SK-N-SH (cell line): ENCODE measurements at regions of chr17 and their contacts with region 1.

Region 1: GRCh38 chr17:80082403-80083135 is 18.8 kb upstream of the GAA start:
- DNase-seq: peak; percentile 94
- H3K4me3 ChIP-seq: no peak overlapping the region; a peak in 1 of 4 replicates
- H3K27ac ChIP-seq: no peak overlapping the region
- H3K4me1 ChIP-seq: peaks cover 0 to 6% of the 10 kb centered on the region in 2 experiments; a peak in 1 of 4 replicates
- H3K27me3 ChIP-seq: no peaks in the 10 kb centered on the region
- CTCF ChIP-seq: peak; percentile 90
- EP300 ChIP-seq: no peak
- RAD21 ChIP-seq: peak; percentile 90

Region 2: GRCh38 chr17:79777116-79777893 is 305.3 kb before region 1 on chr17:
- CTCF ChIA-PET with region 1: no interaction called
- POLR2A ChIA-PET with region 1: no interaction called
- DNase-seq: no peak
- H3K4me3 ChIP-seq: peak overlapping the region; percentile 62 to 64
- H3K27ac ChIP-seq: peak overlapping the region in 1 of 2 experiments; percentile 80; a peak in 2 of 4 replicates
- H3K4me1 ChIP-seq: peaks cover 0 to 20% of the 10 kb centered on the region in 2 experiments; a peak in 3 of 4 replicates
- H3K27me3 ChIP-seq: peaks cover 27% of the 10 kb centered on the region
- CTCF ChIP-seq: peak; percentile 75
- EP300 ChIP-seq: no peak
- RAD21 ChIP-seq: no peak

Region 3: GRCh38 chr17:80053102-80053501 is 29.5 kb before region 1 on chr17:
- CTCF ChIA-PET with region 1: interaction called, 22 read pairs
- POLR2A ChIA-PET with region 1: no interaction called
- DNase-seq: peak; percentile 54
- H3K4me3 ChIP-seq: no peak overlapping the region
- H3K27ac ChIP-seq: no peak overlapping the region
- H3K4me1 ChIP-seq: no peaks in the 10 kb centered on the region
- H3K27me3 ChIP-seq: no peaks in the 10 kb centered on the region
- CTCF ChIP-seq: no peak
- EP300 ChIP-seq: no peak
- RAD21 ChIP-seq: no peak

Region 4: DNA sequence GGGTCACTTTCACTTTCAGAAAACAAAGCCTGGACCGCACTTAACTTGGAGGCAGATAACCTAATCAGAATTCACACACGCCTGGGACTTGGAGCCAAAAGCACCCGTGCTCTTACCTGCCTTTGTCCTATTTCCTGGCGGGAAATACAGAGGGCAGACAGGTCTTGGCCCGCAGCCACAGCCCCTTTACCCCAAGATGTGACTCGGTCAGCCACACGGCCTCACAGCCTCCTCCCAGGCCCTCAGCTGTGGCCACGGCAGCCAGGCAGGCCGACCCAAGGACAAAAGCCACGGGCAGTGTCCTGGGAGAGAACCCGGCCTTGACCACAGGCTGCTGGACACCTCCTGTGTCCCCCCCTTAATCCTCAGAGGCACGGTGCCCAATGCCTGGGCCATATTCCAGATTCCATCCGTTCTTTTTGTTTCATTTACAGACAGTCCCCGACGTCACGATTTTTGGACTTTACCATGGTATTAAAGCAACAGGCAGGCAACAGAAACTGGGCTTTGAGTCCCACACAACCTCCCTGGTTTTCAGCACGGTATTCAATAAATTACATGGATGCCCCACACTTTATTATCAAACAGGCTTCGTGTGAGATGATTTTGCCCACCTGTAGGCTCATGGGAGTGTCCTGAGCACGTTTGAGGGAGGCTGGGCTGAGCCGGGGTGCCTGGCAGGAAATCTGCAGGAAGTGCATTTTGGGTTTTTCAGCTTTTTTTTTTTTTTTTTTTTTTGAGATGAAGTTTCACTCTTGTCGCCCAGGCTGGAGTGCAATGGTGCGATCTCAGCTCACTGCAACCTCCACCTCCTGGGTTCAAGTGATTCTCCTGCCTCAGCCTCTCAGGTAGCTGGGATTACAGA is 11.2 kb before region 1 on chr17:
- CTCF ChIA-PET with region 1: interaction called, 17 read pairs
- POLR2A ChIA-PET with region 1: no interaction called
- DNase-seq: no peak
- H3K4me3 ChIP-seq: no peak overlapping the region
- H3K27ac ChIP-seq: no peak overlapping the region
- H3K4me1 ChIP-seq: peaks cover 0 to 3% of the 10 kb centered on the region in 2 experiments; a peak in 1 of 4 replicates
- H3K27me3 ChIP-seq: no peaks in the 10 kb centered on the region
- CTCF ChIP-seq: no peak
- EP300 ChIP-seq: no peak
- RAD21 ChIP-seq: no peak

Region 5: DNA sequence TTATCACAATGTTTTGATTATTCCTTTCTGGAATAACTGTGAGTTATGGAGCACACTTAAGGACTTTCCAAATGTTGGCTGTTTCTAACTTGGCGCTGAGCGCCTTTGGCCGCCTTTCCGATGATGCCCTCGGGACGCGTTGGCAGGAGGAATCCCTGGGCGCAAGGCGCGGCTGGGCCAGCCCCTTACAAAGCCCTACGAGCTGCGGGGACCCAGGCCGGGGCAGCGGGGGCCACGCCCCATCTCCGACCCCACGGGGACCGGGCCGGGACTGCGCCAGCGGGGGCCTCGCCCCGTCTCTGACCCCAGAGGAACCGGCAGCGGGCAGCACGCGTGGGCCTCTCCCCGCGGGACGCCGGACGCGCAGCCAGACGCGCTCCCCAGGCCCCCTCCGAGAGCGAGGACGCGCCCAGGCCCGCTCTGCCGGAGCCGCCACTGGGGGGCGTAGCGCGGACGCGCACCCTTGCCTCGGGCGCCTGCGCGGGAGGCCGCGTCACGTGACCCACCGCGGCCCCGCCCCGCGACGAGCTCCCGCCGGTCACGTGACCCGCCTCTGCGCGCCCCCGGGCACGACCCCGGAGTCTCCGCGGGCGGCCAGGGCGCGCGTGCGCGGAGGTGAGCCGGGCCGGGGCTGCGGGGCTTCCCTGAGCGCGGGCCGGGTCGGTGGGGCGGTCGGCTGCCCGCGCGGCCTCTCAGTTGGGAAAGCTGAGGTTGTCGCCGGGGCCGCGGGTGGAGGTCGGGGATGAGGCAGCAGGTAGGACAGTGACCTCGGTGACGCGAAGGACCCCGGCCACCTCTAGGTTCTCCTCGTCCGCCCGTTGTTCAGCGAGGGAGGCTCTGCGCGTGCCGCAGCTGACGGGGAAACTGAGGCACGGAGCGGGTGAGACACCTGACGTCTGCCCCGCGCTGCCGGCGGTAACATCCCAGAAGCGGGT is 18.7 kb after region 1 on chr17 and contains the start of gene GAA:
- CTCF ChIA-PET with region 1: interaction called, 86 read pairs
- POLR2A ChIA-PET with region 1: interaction called, 5 read pairs
- DNase-seq: peak; percentile 100
- H3K4me3 ChIP-seq: peak within 1 kb of the TSS; percentile 91 to 95
- H3K27ac ChIP-seq: peak within 1 kb of the TSS; percentile 60 to 92
- H3K4me1 ChIP-seq: peaks cover 6 to 34% of the 10 kb centered on the region in 2 experiments; a peak in 3 of 4 replicates
- H3K27me3 ChIP-seq: no peaks in the 10 kb centered on the region
- CTCF ChIP-seq: peak; percentile 72
- EP300 ChIP-seq: no peak; a peak in 1 of 4 replicates
- RAD21 ChIP-seq: peak; percentile 26; the same call in 1 of the 2 replicates
- polyA plus RNA-seq, gene GAA: 19.5 and 27.3 TPM in 2 replicates

Region 6: DNA sequence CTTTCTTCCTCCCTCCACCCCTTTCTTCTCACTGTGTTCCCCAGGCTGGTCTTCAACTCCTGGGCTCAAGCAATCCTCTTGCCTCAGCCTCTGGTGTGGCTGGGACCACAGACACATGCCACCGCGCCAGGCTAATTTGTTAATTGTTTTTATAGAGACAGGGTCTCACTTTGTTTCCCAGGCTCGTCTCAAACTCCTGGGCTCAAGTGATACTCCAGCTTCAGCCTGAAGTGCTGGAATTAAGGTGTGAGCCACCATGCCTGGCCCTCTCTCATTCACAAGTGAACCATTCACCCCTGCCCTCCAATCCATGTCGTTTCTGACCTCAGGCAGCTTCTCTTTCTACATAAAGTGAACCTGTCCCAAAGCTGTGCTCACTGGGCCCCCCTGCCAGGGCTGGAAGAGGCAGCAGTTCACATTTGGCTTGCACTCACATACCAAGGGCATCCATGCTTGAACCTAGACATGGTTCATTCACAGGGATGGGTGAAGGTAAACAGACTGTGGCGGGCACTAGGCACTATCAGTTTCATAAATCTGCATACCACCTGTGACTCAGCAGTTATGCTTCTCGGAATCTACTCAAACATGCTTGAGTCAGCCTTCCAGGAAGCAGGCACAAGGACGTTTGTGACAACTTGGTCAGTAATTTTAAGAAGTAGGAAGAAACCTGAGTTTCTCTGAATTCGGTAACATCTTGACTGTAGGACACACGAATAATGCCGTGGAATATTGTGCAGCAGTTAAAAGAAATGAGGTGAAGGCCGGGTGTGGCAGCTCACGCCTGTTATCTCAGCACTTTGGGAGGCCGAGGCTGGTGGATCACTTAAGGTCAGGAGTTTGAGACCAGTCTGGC is 172.1 kb after region 1 on chr17:
- CTCF ChIA-PET with region 1: interaction called, 11 read pairs
- POLR2A ChIA-PET with region 1: no interaction called
- DNase-seq: peak; percentile 41
- H3K4me3 ChIP-seq: peak overlapping the region in 1 of 2 experiments; percentile 1; a peak in 1 of 4 replicates
- H3K27ac ChIP-seq: peak overlapping the region; percentile 43 to 88
- H3K4me1 ChIP-seq: peaks cover under 1 to 22% of the 10 kb centered on the region in 2 experiments; a peak in 3 of 4 replicates
- H3K27me3 ChIP-seq: no peaks in the 10 kb centered on the region
- CTCF ChIP-seq: no peak
- EP300 ChIP-seq: peak; percentile 65 to 96; a peak in 3 of 4 replicates
- RAD21 ChIP-seq: no peak

Region 7: GRCh38 chr17:80414803-80415625 is 332.4 kb after region 1 on chr17 and contains the start of gene ENDOV:
- CTCF ChIA-PET with region 1: interaction called, 19 read pairs
- POLR2A ChIA-PET with region 1: no interaction called
- DNase-seq: peak; percentile 100
- H3K4me3 ChIP-seq: peak within 1 kb of the TSS; percentile 98 to 99
- H3K27ac ChIP-seq: peak within 1 kb of the TSS; percentile 99
- H3K4me1 ChIP-seq: peaks cover 5 to 25% of the 10 kb centered on the region in 2 experiments; a peak in 2 of 4 replicates
- H3K27me3 ChIP-seq: no peaks in the 10 kb centered on the region
- CTCF ChIP-seq: no peak
- EP300 ChIP-seq: 0 out of 4 replicates have a peak, but pooled peaks of 1 of the 2 experiments have one; percentile 23
- RAD21 ChIP-seq: no peak
- polyA plus RNA-seq, gene ENDOV: 83.6 and 90.3 TPM in 2 replicates